Breast epithelium (tissue), 4 donors: ENCODE measurements at regions of chr17 and their contacts with region 1.

Region 1: DNA sequence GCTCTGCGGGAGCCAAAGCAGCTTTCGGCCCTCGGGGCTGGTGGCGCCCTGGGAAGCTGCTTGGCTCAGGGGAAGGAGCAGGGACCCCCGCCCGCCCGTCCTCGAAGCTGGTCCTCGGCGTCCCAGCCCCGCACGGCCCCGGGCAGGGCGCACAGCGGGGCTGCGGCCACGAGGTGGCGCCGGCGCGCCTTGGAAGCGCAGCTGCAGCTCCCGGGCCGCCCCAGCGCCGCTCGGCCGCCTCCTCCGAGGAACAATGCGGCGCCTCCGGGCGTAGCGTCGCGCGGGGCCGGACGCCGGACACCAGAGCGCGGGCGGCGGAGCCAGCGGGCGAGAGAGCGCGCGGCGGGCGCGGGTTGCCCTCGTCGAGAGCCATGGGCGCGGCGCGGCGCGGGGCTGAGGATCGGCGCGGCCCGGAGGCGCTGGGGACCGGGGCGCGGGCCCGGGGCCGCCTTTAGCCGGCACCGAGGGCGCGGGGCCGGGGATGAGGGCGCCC is at the start of gene MGAT5B:
- DNase-seq: peak; percentile 28 to 66
- H3K4me3 ChIP-seq: peak within 1 kb of the TSS; percentile 36 to 67 (median 40)
- H3K27ac ChIP-seq: no peak within 1 kb of the TSS
- H3K4me1 ChIP-seq: peaks cover 0 to 3% of the 10 kb centered on the region in 2 donors
- H3K27me3 ChIP-seq: peaks cover 11 to 52% of the 10 kb centered on the region in 2 donors
- CTCF ChIP-seq: peak in 2 of 3 donors; percentile 37 to 92
- POLR2A ChIP-seq: no peak
- total RNA-seq, gene MGAT5B: 0.32 to 0.33 TPM in 2 of 3 donors, not detected in the other

Region 2: DNA sequence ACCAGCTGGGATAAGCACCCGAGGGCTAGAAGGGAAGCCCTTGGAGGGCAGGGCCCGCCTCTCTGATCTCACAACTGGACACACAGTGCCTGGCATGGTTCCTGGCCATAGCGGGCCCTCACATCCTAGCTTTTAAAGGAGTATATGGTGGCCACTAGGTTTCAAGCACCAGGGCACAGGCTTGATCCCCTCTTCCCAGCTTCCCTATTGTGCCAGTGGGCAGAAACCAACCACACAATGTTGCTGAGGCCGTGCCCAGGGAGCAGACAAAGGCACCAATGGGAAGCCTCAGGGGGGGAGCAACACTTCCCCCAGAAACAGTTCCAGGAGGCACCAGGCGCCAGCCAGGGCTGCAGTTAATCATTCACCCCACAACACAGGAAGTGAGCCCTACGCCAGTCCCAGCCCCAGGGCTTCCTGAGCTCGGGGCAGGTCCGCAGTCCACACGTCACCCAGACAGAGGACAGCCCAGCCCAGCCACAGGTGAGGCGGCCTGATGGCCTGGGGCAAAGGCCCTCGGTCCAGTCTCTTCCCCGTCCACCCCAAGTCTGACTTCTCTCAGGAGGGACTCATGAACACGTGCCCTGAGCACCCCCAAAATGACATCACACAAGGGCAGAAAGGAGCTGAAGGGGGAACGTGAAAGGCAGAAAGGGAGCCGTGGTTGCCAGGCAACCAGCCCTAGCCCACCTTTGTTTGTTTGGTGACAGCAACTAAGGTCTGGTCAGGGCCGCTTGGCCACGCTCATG is 1222.2 kb before region 1 on chr17:
- intact Hi-C with region 1: no loop called
- DNase-seq: peak; percentile 46 to 49
- H3K4me3 ChIP-seq: no peak overlapping the region
- H3K27ac ChIP-seq: peak overlapping the region; percentile 88 to 95
- H3K4me1 ChIP-seq: peaks cover 5 to 13% of the 10 kb centered on the region in 2 donors
- H3K27me3 ChIP-seq: no peaks in the 10 kb centered on the region
- CTCF ChIP-seq: no peak
- POLR2A ChIP-seq: no peak

Region 3: GRCh38 chr17:76948726-76949342 is 80.6 kb after region 1 on chr17:
- intact Hi-C with region 1: no loop called
- DNase-seq: peak; percentile 56 to 62
- H3K4me3 ChIP-seq: peak overlapping the region in 2 of 3 donors; percentile 2 to 46
- H3K27ac ChIP-seq: no peak overlapping the region
- H3K4me1 ChIP-seq: peaks cover 0 to 3% of the 10 kb centered on the region in 2 donors
- H3K27me3 ChIP-seq: no peaks in the 10 kb centered on the region
- CTCF ChIP-seq: no peak
- POLR2A ChIP-seq: no peak

Region 4: DNA sequence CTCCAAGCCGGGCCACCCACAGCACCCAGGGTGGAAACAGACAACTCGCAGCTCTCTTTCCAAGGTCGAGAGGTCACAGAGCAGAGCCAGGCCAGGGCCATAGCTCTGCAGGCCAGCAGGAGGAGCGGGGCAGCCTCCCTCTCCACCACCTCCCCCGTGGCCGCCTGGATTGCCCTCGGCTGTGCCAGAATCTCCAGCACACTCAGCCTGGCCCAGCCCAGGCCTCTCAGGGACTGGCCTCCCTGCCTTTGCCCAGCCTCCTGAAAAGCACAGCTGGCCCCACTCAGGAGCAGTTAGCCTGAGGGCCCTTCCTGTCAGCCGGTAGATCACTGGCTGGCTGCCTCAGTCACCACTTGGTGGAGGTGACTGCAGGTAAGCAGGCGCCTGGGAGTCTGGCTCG is 186.7 kb after region 1 on chr17:
- intact Hi-C with region 1: loop called (anchors 10 kb)
- DNase-seq: no peak
- H3K4me3 ChIP-seq: no peak overlapping the region
- H3K27ac ChIP-seq: no peak overlapping the region
- H3K4me1 ChIP-seq: no peaks in the 10 kb centered on the region
- H3K27me3 ChIP-seq: peaks cover 0 to 44% of the 10 kb centered on the region in 2 donors
- CTCF ChIP-seq: no peak
- POLR2A ChIP-seq: no peak